A673 (cell line): ENCODE measurements at regions of chr3 and their contacts with region 1.

Region 1: DNA sequence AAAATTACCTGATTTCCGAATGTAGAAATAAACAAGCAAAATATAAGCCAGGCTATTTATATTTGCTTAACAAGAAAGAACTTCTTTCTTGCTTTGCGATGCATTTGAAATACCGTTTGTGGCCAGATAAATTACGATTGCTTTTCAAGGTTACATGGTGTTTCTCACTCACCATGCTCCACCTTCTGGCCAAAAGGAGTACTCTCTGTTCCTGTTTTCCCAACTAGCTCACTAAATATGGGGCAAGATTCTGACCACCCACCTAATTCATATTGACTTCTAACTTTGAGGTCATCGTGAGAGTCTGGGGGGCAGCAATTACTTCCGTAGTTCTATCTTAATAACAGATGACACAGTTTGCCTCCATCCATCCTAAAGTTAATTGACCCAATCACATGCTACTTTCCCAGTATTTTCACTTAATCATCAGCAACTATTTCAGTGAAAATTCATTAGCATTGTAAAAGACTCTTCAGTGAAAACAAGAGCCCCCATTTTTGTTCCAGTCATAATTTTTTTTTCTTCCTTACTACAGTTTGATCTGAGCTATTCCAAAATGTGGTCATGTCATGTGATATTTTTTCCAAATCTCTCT is 25.9 kb downstream of the ACP3 start:
- DNase-seq: peak; percentile 75
- H3K4me3 ChIP-seq: no peak overlapping the region
- H3K27ac ChIP-seq: no peak overlapping the region
- H3K4me1 ChIP-seq: no peaks in the 10 kb centered on the region
- H3K27me3 ChIP-seq: no peaks in the 10 kb centered on the region
- CTCF ChIP-seq: peak; percentile 87

Region 2: DNA sequence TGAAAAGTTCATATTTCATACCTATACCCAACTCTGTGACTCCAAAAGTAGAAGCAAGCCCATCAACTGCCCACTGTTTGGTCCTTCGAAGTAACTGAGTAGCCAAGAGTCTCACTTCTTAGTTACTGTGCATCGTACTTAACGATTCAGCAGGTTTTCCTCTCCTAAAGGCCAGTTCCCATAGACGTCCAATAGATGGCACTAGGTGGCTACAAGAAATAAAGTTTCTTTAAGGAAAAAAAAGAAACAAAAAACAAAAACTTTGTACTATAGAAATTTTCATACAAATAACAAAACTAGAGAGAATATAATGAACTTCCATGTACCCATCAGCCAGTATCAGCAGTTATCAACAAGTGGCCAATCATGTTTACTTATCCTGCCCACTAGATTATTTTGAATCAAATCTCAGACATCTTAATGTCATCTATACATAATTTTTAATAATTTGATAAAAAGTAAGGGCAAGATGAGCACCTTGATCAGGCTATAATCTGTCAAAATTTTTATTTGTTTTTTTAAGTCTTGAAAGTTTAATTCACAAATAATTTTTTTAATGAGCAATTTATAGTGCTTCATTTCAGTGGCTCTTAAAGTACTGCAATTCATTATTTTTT is 89.7 kb before region 1 on chr3:
- CTCF ChIA-PET with region 1: interaction called, 25 read pairs
- POLR2A ChIA-PET with region 1: no interaction called
- intact Hi-C with region 1: loop called (anchors 1 kb)
- DNase-seq: peak; percentile 79
- H3K4me3 ChIP-seq: no peak overlapping the region
- H3K27ac ChIP-seq: no peak overlapping the region
- H3K4me1 ChIP-seq: peaks cover 8% of the 10 kb centered on the region
- H3K27me3 ChIP-seq: no peaks in the 10 kb centered on the region
- CTCF ChIP-seq: peak; percentile 78